ENCODE measurements at regions of chr18 and their contacts with region 1.

Region 1: DNA sequence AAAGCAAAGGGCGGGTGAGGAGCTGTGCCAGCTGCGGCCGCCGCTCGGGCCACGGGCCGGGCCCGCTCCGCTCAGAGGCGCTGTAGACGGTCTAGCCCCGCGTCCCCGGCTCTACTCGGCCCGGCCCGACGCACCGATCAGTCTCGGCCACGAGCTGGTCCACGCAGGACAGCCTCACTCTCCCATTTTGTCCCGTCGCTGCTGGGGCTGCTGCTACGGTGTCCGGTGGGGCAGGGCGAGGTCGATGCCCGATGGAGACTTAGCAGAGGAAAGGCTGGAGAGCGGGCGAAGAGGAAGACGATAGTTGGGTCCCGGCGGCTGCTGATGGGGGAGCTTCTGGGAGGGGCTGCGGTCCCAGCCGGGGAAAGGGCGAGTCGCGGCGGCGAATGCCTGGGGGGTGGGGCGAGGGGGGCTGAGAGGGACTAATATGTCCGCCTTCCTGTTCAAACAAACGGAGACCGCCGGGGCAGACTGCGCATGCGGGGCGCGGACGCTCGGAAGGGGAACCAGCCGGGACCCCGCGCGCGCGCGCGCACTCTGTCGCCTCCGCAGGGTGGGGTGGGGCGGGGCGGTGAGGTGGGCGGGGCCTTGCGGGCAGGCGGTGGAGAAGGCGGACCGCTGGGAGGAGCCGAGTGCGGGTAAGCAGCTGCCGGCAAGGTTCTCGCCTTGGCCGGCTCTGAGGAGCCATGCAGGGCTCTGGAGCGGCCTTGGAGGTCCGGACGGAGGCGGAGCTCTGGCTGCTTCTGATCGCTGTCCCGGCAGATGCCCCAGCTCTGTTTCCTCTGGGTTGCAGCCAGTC is at the start of gene ROCK1:
- DNase-seq: peak; percentile 96 to 99
- H3K4me3 ChIP-seq: peak within 1 kb of the TSS; percentile 95 to 99
- H3K27ac ChIP-seq: peak within 1 kb of the TSS; percentile 98 to 99
- H3K4me1 ChIP-seq: peaks cover 16% of the 10 kb centered on the region in 2 donors
- H3K27me3 ChIP-seq: no peaks in the 10 kb centered on the region
- CTCF ChIP-seq: no peak
- total RNA-seq, gene ROCK1: 32.0 TPM

Region 2: DNA sequence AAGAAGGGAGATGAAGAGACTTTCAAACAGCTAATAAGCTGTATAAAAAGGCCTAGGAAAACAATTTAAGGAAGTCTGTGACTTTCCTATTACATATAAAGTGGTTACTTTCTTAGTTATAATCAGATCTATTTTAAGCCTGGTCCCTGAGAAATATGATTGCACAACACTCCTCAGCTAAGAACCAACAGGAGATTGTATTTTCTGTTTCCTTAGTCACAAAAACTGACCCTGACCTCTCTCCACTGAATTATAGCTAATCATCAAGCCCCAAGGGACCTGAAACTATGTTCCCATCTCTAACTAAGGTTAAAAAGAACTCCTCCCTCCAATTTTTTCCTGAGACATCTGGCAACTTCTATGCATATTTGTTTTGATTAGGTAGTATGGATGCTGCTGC is 106.8 kb before region 1 on chr18:
- intact Hi-C with region 1: loop called (anchors 5 kb)
- DNase-seq: no peak
- H3K4me3 ChIP-seq: peak overlapping the region in 1 of 2 donors; percentile 8
- H3K27ac ChIP-seq: peak overlapping the region; percentile 63 to 79
- H3K4me1 ChIP-seq: peaks cover 0 to 18% of the 10 kb centered on the region in 2 donors
- H3K27me3 ChIP-seq: no peaks in the 10 kb centered on the region
- CTCF ChIP-seq: no peak

Region 3: GRCh38 chr18:21053127-21053526 is 58.4 kb before region 1 on chr18:
- intact Hi-C with region 1: loop called (anchors 2 kb)
- DNase-seq: no peak
- H3K4me3 ChIP-seq: no peak overlapping the region
- H3K27ac ChIP-seq: peak overlapping the region; percentile 69 to 74
- H3K4me1 ChIP-seq: peaks cover 13 to 45% of the 10 kb centered on the region in 2 donors
- H3K27me3 ChIP-seq: no peaks in the 10 kb centered on the region
- CTCF ChIP-seq: no peak

Region 4: DNA sequence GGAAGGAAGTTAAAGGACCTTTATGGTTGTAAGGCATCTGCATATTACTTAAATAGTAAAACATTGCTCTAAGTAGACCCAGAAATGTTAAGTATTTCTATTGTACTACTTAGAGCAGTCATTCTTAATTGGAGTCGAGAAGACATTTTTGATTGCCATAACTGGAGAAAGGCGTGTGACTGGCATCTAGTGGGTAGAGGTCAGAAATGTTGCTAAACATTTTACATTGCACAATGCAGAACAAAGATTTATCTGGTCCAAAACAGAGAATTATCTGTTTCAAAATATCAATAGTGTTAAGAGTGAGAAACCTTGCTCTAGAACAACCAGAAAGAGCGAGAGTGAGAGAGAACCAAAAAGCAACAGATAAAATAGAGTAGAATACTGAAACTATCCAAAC is 23.4 kb after region 1 on chr18:
- intact Hi-C with region 1: loop called (anchors 2 kb)
- DNase-seq: no peak
- H3K4me3 ChIP-seq: no peak overlapping the region
- H3K27ac ChIP-seq: no peak overlapping the region
- H3K4me1 ChIP-seq: no peaks in the 10 kb centered on the region
- H3K27me3 ChIP-seq: no peaks in the 10 kb centered on the region
- CTCF ChIP-seq: peak; percentile 15 to 52 (median 36)

Region 5: GRCh38 chr18:21230436-21230835 is 118.9 kb after region 1 on chr18:
- intact Hi-C with region 1: no loop called
- DNase-seq: no peak
- H3K4me3 ChIP-seq: no peak overlapping the region
- H3K27ac ChIP-seq: no peak overlapping the region
- H3K4me1 ChIP-seq: no peaks in the 10 kb centered on the region
- H3K27me3 ChIP-seq: no peaks in the 10 kb centered on the region
- CTCF ChIP-seq: no peak

Region 6: GRCh38 chr18:21458310-21458709 is 346.8 kb after region 1 on chr18:
- intact Hi-C with region 1: loop called (anchors 5 kb)
- DNase-seq: peak in 1 of 2 donors; percentile 71
- H3K4me3 ChIP-seq: peak overlapping the region in 1 of 2 donors; percentile 13
- H3K27ac ChIP-seq: peak overlapping the region; percentile 69 to 75
- H3K4me1 ChIP-seq: peaks cover 7 to 44% of the 10 kb centered on the region in 2 donors
- H3K27me3 ChIP-seq: no peaks in the 10 kb centered on the region
- CTCF ChIP-seq: no peak